Panc1 (cell line): ENCODE measurements at regions of chr7 and their contacts with region 1.

Region 1: DNA sequence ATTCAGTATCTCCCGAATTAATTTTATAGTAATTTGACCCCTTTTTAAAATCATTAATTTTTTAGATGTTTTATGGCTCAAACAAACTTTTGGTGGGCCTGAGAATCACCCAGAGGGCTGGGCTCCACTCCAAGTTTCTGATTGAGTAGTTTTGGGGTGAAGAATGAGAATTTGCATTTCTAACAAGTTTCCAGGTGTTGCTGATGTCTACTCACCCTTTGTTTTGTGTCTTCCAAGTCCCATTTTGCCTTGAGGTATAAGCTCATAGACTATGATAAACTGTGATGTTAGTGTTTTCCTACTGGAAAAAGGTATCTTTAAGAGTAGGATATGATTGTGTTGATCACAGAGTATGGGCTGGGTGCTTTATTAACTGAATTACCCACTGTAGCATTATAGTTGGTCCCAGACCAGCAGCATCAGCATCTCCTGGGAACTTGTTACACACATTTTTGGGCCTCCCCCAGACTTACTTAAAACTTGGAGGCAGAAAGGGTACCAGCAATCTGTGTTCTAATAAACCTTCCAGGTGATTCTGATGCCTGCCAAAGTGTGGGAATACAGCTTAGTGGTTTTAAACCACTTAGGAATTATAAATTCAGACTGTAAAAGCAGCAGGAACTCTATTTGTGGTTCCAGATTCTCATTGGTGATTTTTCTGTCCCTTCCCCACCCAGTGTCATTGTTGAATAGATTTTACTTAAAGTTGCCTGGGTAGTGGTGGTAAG is 19.1 kb downstream of the ZNRF2 start:
- DNase-seq: no peak
- ATAC-seq: no peak
- H3K4me3 ChIP-seq: no peak overlapping the region
- H3K27ac ChIP-seq: no peak overlapping the region
- H3K4me1 ChIP-seq: peaks cover 12% of the 10 kb centered on the region; the same call in 1 of the 2 replicates
- H3K27me3 ChIP-seq: no peaks in the 10 kb centered on the region
- CTCF ChIP-seq: no peak

Region 2: DNA sequence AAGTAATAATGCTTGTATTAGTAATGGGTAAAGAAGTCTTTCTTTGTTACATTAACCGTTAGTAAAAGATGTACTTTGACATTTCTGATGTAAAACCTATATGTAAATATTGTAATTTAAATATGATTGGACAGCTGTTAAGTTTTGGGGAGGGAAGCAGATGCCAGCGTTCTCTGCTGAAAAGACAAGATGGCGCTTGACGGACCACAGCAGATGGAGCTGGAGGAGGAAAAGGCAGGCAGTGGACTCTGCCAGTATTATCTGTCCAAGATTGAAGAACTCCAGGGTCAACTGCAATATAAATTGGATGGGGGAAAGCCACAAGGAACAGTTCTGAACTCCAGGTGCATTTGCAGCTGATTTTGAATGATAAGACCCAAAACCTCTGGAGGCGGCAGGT is 67.8 kb after region 1 on chr7:
- CTCF ChIA-PET with region 1: no interaction called
- POLR2A ChIA-PET with region 1: interaction called, 10 read pairs
- in situ Hi-C with region 1: no loop called
- intact Hi-C with region 1: no loop called
- DNase-seq: no peak
- ATAC-seq: no peak
- H3K4me3 ChIP-seq: no peak overlapping the region
- H3K27ac ChIP-seq: no peak overlapping the region
- H3K4me1 ChIP-seq: peaks cover 11% of the 10 kb centered on the region; the same call in 1 of the 2 replicates
- H3K27me3 ChIP-seq: no peaks in the 10 kb centered on the region
- CTCF ChIP-seq: no peak